Activated CD4-positive, alpha-beta T cell treated with anti-CD3 and anti-CD28 coated beads, Interleukin-2, amount 10 ng/mL, durations not matched to agents 24 days and 14 days (primary cell): ENCODE measurements at regions of chr10 and their contacts with region 1.

Region 1: DNA sequence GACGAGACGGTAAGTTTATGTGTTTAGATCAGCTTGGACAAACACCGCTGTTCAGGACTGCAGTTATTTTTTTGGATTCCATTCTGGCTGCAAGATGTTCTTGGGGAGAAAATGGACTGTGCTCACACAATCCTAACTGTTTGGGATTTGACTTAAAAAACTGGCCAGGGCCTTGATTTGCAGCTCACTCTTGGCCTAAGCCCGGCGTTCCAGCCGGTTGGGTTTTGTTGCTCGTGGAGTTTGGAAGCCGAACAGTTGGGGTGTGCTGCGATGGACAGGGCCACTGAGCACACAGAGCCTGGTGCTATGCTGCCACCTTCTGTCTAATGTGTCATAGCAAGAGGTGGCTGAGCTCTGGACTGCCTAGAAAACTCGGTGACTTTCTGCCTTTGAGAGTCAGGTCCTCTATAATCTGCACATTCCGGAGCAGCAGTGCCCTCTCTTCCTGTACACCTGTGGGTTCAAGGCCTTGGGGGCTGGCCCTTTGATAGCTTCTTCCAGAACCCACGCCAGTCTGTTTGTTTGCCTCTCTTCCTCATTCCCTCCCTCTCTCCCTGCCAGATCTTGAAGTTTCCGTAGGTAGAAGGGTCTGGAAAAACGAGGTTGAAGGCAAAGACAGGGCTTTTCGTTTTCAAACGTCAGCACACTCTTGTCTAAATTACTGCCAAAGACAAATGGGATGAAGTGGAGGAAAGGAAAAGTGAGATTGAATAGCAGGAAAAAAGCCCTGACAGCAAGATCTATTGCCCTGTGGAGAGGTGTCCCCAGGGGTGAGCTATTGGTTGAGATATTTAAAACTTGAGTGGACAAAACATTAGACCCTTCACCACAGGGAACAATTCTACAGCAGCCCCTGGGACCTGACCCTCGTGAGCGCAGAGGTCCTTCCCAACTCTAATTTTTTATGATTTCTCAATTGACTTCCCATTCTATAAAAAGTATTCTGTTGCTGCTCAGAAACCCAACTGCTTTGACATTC is 167.5 kb upstream of the HABP2 start:
- DNase-seq: peak; percentile 83
- H3K4me3 Mint-ChIP-seq: no peak overlapping the region
- H3K27ac Mint-ChIP-seq: no peak overlapping the region
- H3K4me1 Mint-ChIP-seq: peaks cover 10% of the 10 kb centered on the region
- H3K27me3 Mint-ChIP-seq: peaks cover 40% of the 10 kb centered on the region

Region 2: DNA sequence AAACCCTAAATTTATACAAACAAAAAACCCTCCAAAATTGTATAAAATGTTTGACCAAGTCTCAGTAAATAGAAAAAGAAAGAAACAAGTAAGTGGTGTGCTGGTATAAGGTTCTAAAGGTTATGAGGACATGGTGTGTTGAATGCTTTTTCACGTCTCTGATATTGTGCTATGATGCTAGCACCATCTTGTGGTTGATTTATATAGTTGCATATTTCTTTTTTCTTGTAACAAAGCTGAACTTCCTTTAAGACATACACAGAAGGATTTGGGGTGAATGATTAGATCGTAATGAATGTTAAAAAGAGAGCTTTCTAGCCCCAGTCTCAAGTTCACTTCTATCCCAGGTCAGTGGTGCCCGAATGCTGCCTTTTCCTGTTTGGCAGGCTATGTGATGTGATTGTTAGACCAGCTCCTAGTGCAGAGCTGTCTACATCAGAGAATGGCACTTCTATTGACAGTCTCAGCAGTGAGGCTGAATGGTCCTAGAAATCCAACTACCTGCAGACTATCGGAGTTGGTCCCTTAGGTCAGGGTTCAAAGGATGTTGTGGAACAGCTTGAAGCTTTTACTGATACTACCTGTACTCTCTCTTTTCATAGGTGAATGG is 913.3 kb before region 1 on chr10:
- intact Hi-C with region 1: loop called (anchors 5 kb)
- DNase-seq: peak; percentile 60
- H3K4me3 Mint-ChIP-seq: no peak overlapping the region
- H3K27ac Mint-ChIP-seq: no peak overlapping the region
- H3K4me1 Mint-ChIP-seq: peaks cover 4% of the 10 kb centered on the region
- H3K27me3 Mint-ChIP-seq: no peaks in the 10 kb centered on the region

Region 3: DNA sequence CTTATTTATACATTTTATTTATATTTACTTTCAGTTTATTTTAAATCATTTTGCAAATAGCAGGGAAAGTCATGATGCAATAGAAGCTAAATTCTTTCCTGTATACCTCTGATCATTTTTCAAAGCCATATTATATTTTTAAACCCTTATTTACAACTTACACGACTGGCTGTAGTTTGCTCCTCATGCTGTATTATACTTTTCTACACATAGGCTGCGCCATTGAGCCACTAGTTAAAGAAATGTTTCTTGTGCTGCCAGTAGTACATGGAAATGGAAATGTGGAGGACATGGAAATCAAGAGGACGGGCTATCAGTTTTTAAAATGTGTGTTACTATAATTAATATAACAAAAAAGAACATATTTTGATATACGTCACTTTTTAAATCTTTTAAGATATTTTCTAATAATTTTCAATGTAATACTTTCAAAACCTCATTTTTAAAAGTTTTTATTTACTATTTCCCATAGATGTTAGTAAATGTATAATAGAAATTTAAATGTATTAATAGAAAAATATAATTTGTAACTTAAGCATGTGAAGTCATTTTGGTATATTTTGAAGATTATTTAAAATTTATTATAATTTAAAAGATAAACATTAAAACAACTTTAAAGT is 819.8 kb before region 1 on chr10:
- intact Hi-C with region 1: loop called (anchors 10 kb)
- DNase-seq: peak; percentile 74
- H3K4me3 Mint-ChIP-seq: no peak overlapping the region
- H3K27ac Mint-ChIP-seq: no peak overlapping the region
- H3K4me1 Mint-ChIP-seq: no peaks in the 10 kb centered on the region
- H3K27me3 Mint-ChIP-seq: no peaks in the 10 kb centered on the region

Region 4: DNA sequence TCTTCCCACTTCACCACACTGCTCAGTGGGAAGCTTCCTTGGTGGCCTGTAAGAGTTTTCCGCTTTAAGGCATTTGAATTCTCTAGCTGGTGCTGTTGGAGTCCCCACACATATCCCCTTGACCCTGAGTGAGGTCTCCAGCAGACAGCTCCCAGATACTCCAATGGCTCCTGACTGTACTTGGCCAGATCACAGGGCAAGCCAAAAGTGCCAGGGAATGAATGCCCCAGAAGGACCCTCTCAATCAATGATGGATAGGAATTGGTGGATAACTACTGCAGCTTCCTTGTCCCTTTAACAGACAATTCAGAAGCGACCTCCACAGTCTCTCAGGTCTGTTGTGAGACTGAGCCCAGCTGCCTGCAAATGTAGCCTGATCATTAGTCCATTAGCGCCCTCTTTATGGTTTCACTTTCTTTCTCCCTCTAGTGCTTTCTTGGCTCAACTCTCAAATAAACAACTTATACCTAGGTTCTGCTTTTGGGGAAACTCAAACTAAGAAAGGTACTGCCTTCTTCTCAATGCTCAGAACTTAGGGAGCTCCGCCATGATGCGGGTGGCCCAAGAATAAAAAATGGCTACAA is 152.3 kb before region 1 on chr10:
- intact Hi-C with region 1: no loop called
- DNase-seq: no peak
- H3K4me3 Mint-ChIP-seq: no peak overlapping the region
- H3K27ac Mint-ChIP-seq: no peak overlapping the region
- H3K4me1 Mint-ChIP-seq: no peaks in the 10 kb centered on the region
- H3K27me3 Mint-ChIP-seq: peaks cover 4% of the 10 kb centered on the region